ENCODE measurements at regions of chrX and their contacts with region 1.

Region 1: DNA sequence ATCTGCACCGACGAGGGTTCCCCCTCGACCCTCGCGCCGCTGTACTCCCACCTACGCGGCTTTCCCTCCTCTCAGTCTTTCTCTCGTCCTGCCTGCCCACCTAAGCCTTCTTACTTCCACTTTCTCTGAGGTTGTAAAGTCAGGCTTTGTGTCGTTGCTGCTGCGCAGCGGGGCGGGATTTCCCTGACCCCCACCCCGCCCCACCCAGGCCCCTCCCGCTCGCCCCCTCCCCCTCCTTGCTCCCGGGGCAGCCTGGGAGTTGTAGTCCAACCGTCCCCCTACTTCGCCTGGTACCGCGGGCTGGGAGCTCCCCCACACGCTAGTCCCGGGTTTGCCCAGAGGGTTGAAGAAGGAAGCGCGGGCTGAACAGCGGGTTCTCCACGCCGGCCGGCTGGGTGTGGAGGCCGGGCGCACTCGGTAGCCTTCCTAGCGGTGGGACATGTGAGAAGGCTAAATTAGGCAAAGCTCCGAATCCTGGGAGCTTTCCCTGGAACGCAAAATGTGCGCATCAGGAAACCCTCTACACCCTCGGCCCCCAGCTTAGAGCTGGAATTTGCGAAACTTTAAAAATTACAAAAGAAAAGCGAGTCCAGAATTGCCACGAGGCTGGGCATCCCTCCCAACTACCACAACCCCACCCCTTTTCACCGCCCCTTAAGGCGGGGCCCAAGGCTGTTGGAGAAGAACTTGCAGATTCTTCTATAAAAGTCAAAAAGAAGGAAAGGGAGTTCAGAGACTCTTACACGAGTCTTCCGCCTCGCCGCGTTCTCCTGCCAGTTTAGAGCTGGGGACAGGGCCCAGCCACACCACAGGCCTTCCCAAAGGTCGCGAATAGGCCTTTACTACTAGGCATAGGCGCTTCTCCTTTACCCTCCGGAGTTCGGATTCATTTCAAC is at the start of gene ATP11C:
- DNase-seq: peak; percentile 46
- ATAC-seq: peak; percentile 82
- H3K4me3 ChIP-seq: peak within 1 kb of the TSS; percentile 79
- H3K27ac ChIP-seq: peak within 1 kb of the TSS; percentile 83
- H3K4me1 ChIP-seq: no peaks in the 10 kb centered on the region
- H3K27me3 ChIP-seq: no peaks in the 10 kb centered on the region
- CTCF ChIP-seq: peak in 2 of 3 experiments; percentile 11 to 50; a peak in 3 of 6 replicates
- EP300 ChIP-seq: no peak
- POLR2A ChIP-seq: peak; percentile 88
- RAD21 ChIP-seq: peak; percentile 69
- polyA plus RNA-seq, gene ATP11C: 16.2 to 19.1 TPM

Region 2: GRCh38 chrX:139559383-139560042 is 373.6 kb before region 1 on chrX:
- CTCF ChIA-PET with region 1: interaction called, 5 read pairs
- POLR2A ChIA-PET with region 1: no interaction called
- RAD21 ChIA-PET with region 1: no interaction called
- SMC1A ChIA-PET with region 1: no interaction called
- in situ Hi-C with region 1: loop called (anchors 10 kb)
- intact Hi-C with region 1: loop called (anchors 5 kb)
- DNase-seq: peak; percentile 30
- ATAC-seq: peak; percentile 97
- H3K4me3 ChIP-seq: no peak overlapping the region
- H3K27ac ChIP-seq: no peak overlapping the region
- H3K4me1 ChIP-seq: peaks cover 6% of the 10 kb centered on the region
- H3K27me3 ChIP-seq: no peaks in the 10 kb centered on the region
- CTCF ChIP-seq: peak; percentile 51 to 61 (median 58); a peak in 5 of 6 replicates
- EP300 ChIP-seq: no peak
- POLR2A ChIP-seq: no peak
- RAD21 ChIP-seq: peak; percentile 78

Region 3: GRCh38 chrX:139581068-139581467 is 352.1 kb before region 1 on chrX:
- CTCF ChIA-PET with region 1: no interaction called
- POLR2A ChIA-PET with region 1: no interaction called
- RAD21 ChIA-PET with region 1: no interaction called
- SMC1A ChIA-PET with region 1: no interaction called
- in situ Hi-C with region 1: no loop called
- intact Hi-C with region 1: no loop called
- DNase-seq: no peak
- ATAC-seq: no peak
- H3K4me3 ChIP-seq: no peak overlapping the region
- H3K27ac ChIP-seq: no peak overlapping the region
- H3K4me1 ChIP-seq: no peaks in the 10 kb centered on the region
- H3K27me3 ChIP-seq: no peaks in the 10 kb centered on the region
- CTCF ChIP-seq: no peak
- EP300 ChIP-seq: no peak
- POLR2A ChIP-seq: no peak
- RAD21 ChIP-seq: no peak

Region 4: DNA sequence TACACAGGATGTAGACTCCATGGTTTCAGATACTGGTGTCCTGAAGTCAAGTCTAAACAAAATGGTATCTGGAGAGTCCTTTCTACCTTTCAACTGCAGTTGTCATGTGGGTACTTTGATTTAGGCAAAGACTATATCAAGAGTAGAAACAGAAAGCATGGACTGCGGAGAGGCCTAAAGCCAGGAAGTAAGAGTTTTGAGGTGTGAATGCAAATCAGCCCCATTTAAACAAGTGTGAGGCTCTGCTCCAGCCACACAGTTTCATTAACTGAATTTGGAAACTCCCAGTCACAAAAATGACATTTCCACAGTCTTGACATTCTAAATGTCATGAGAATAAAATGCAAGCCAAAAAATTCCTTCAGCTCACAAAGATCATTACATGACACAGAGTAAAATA is 138.0 kb before region 1 on chrX:
- CTCF ChIA-PET with region 1: interaction called, 4 read pairs
- POLR2A ChIA-PET with region 1: interaction called, 3 read pairs
- RAD21 ChIA-PET with region 1: interaction called, 4 read pairs
- SMC1A ChIA-PET with region 1: no interaction called
- in situ Hi-C with region 1: no loop called
- intact Hi-C with region 1: loop called (anchors 10 kb)
- DNase-seq: peak; percentile 57
- ATAC-seq: peak; percentile 100
- H3K4me3 ChIP-seq: no peak overlapping the region
- H3K27ac ChIP-seq: peak overlapping the region; percentile 71
- H3K4me1 ChIP-seq: peaks cover 14% of the 10 kb centered on the region; the same call in 1 of the 2 replicates
- H3K27me3 ChIP-seq: no peaks in the 10 kb centered on the region
- CTCF ChIP-seq: no peak
- EP300 ChIP-seq: peak; percentile 67 to 68; a peak in 3 of 4 replicates
- POLR2A ChIP-seq: no peak
- RAD21 ChIP-seq: no peak

Region 5: DNA sequence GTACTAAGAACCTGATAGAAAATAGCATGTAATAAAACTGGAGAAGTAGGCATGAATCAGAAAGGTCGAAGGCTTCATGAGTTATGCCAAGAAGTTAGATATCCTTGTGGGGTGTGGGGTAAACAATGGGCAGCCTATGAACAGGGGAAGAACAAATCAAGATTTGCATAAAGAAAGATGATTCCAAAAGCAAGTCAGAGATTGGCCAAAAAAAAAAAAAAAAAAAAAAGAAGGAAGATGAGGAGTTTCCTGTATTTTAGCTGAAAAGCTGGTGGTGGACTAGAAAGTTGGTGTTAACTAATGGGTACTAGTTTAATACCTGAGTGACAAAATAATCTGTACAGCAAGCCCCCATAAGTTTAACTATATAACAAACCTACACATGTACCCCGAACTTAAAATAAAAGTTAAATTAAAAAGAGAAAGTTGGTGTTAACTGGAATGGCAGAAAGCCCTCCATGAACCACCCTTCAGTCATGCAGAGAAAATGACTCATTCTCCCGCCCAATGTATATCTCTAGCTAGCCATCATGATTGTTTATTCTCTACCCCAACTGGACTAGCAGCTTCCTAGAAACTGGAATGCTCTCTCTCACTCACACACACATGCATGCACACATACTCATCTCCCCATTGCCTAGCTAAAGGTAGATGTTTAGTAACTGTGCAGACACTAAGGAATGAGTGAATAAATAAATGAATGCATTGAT is 42.0 kb before region 1 on chrX:
- CTCF ChIA-PET with region 1: no interaction called
- POLR2A ChIA-PET with region 1: no interaction called
- RAD21 ChIA-PET with region 1: interaction called, 3 read pairs
- SMC1A ChIA-PET with region 1: interaction called, 9 read pairs
- in situ Hi-C with region 1: no loop called
- intact Hi-C with region 1: loop called (anchors 5 kb)
- DNase-seq: no peak
- ATAC-seq: no peak
- H3K4me3 ChIP-seq: no peak overlapping the region
- H3K27ac ChIP-seq: no peak overlapping the region
- H3K4me1 ChIP-seq: 0 out of 2 replicates have a peak, but pooled peaks cover 3% of the 10 kb centered on the region
- H3K27me3 ChIP-seq: no peaks in the 10 kb centered on the region
- CTCF ChIP-seq: no peak
- EP300 ChIP-seq: no peak
- POLR2A ChIP-seq: no peak
- RAD21 ChIP-seq: no peak

Measured in GM12878 (cell line).